ENCODE measurements at regions of chr22 and their contacts with region 1.

Region 1: DNA sequence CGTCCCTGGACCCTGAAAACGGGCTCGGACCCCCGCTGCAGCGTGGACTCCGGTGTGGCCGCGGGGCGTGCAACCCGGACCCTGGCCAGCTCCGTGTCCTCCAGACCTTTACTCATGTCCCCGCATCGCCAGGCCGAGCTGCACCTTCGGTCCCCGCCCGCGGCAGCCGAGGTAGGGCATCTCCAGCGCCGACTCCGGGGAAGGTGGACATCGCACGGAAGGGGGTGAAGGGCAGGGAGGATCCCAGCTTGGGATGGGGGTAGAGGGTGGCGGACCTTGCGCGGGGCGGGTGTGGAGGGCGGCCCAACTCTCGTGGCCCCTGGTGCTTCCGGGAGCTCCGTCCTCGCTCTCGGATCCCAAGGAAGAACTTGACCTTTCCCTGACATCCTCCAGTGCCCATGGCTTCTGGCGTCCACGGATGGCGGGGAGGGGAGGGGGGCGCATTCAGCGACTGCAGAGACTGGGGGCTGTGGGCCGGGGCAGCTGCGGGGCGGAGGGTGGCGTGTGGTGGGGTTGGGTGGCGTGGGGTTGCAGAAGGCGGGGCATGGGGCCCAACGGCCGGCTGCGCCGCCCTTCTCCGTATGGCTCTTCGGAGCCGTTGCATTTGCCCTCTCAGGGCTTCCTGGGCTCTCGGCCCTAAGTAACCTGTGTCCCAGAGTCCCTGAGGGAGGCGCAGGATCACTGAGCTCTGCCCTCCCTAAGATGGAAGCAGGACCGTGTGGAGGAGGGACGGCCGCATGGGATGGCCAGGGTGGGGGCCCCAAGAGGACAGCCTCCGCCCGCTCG is 9.5 kb upstream of the AIFM3 start:
- DNase-seq: peak; percentile 21 to 32 (median 30)
- H3K4me3 ChIP-seq: peak overlapping the region; percentile 81 to 99 (median 98)
- H3K4me3 Mint-ChIP-seq: peak overlapping the region; percentile 87 to 91
- H3K27ac ChIP-seq: peak overlapping the region; percentile 19 to 87
- H3K27ac Mint-ChIP-seq: peak overlapping the region in 6 of 7 donors; percentile 51 to 85 (median 66)
- H3K4me1 ChIP-seq: peaks cover 27 to 44% of the 10 kb centered on the region in 2 donors
- H3K4me1 Mint-ChIP-seq: peaks cover 39% of the 10 kb centered on the region
- H3K27me3 ChIP-seq: no peaks in the 10 kb centered on the region
- H3K27me3 Mint-ChIP-seq: no peaks in the 10 kb centered on the region
- CTCF ChIP-seq: no peak

Region 2: GRCh38 chr22:20885557-20886323 is 71.8 kb before region 1 on chr22:
- intact Hi-C with region 1: loop called in 1 of 2 experiments (anchors 10 kb)
- DNase-seq: peak; percentile 76 to 84 (median 84)
- H3K4me3 ChIP-seq: no peak overlapping the region
- H3K4me3 Mint-ChIP-seq: peak overlapping the region; percentile 14 to 41
- H3K27ac ChIP-seq: peak overlapping the region; percentile 23 to 54
- H3K27ac Mint-ChIP-seq: peak overlapping the region; percentile 53 to 93 (median 78)
- H3K4me1 ChIP-seq: peaks cover 3 to 4% of the 10 kb centered on the region in 2 donors
- H3K4me1 Mint-ChIP-seq: peaks cover 8% of the 10 kb centered on the region
- H3K27me3 ChIP-seq: no peaks in the 10 kb centered on the region
- H3K27me3 Mint-ChIP-seq: peaks cover 0 to 3% (median 0%) of the 10 kb centered on the region in 3 donors
- CTCF ChIP-seq: peak; percentile 98